ENCODE measurements at regions of chr2 and their contacts with region 1.

Region 1: DNA sequence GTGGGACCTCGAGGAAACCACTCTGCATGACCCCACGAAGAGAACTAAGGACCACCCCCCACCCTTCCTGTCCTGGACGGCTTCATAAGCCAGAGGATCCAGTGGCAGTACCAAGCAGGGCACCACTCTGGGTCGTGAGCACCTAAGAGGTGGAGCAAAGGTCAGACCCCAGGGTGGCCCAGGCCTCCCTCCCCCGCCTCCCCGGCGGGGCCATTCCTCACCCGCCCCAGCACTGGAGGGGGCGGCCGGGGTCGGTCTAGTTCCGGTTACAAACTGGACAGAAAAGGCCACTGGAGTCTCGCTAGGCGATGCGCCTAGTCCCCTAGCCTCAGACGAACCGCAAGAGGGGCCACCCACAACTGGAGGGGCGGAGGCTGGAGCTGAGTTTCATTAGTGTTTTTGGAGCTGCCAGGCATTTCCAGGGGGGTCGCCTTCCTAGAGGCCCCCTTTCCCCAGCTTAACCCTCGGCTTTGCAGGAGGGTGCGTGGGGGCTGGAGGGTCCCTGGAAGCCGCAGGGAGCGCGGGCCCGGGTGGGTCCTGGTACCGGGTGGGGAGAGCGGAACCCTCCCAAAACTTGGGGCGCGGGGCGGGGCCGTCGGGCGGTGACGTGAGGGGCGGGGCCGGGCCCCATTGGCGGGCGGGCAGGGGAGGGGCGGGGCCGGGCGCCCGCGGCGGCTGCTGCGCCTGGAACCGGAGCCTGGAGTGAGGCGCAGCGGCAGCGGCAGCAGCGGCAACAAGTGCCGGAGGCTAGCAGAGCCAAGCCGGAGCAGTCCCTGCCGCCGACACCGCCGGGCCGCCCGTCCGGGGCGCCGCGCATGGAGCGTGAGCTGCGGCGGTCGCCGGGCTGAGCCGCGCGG is at the start of gene B3GNT2:
- DNase-seq: peak; percentile 75
- H3K4me3 Mint-ChIP-seq: peak within 1 kb of the TSS; percentile 87
- H3K27ac Mint-ChIP-seq: peak within 1 kb of the TSS; percentile 89
- H3K4me1 Mint-ChIP-seq: peaks cover 36% of the 10 kb centered on the region
- H3K27me3 Mint-ChIP-seq: no peaks in the 10 kb centered on the region
- total RNA-seq, gene B3GNT2: 32.8 and 37.3 TPM in 2 replicates

Region 2: DNA sequence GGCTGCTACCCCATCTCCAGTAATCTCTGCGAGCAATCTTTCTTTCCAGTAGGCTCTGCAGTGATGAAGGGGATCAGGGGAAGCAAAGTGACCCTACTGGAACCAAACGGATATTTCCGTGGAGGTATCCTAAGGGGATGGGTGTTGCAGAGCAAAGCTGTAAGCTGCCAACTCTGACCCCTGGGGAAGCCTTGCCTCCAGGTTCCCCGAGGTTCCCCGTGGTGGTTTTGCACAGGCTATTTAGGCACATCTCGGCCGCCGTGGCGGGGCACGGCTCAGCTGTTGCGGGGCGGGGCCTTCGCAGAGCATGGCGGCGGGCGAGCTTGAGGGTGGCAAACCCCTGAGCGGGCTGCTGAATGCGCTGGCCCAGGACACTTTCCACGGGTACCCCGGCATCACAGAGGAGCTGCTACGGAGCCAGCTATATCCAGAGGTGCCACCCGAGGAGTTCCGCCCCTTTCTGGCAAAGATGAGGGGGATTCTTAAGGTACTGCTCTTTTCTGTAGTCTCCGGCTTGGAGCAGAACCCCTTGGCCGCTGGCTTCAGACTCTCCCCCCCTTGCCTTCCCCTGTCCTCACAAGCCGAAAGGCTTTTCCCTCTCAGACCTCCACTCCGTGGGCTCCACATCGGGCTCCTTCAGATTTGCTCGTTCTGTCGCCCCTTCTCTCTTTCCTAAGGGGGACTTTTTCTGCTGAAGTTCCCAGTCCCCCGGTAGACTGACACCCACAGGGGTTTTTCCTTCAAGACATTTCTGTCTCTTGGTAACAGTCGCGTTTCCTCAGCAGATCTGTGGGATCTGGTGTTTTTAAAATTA is 290.1 kb before region 1 on chr2 and contains the start of gene COMMD1:
- intact Hi-C with region 1: loop called (anchors 5 kb)
- DNase-seq: peak; percentile 78
- H3K4me3 Mint-ChIP-seq: peak within 1 kb of the TSS; percentile 97
- H3K27ac Mint-ChIP-seq: peak within 1 kb of the TSS; percentile 81
- H3K4me1 Mint-ChIP-seq: peaks cover 18% of the 10 kb centered on the region
- H3K27me3 Mint-ChIP-seq: no peaks in the 10 kb centered on the region
- total RNA-seq, gene COMMD1: 25.4 and 28.9 TPM in 2 replicates

Region 3: GRCh38 chr2:61922714-61923113 is 272.9 kb before region 1 on chr2:
- intact Hi-C with region 1: loop called (anchors 1 kb)
- DNase-seq: no peak
- H3K4me3 Mint-ChIP-seq: no peak overlapping the region
- H3K27ac Mint-ChIP-seq: no peak overlapping the region
- H3K4me1 Mint-ChIP-seq: no peaks in the 10 kb centered on the region
- H3K27me3 Mint-ChIP-seq: no peaks in the 10 kb centered on the region

Region 4: DNA sequence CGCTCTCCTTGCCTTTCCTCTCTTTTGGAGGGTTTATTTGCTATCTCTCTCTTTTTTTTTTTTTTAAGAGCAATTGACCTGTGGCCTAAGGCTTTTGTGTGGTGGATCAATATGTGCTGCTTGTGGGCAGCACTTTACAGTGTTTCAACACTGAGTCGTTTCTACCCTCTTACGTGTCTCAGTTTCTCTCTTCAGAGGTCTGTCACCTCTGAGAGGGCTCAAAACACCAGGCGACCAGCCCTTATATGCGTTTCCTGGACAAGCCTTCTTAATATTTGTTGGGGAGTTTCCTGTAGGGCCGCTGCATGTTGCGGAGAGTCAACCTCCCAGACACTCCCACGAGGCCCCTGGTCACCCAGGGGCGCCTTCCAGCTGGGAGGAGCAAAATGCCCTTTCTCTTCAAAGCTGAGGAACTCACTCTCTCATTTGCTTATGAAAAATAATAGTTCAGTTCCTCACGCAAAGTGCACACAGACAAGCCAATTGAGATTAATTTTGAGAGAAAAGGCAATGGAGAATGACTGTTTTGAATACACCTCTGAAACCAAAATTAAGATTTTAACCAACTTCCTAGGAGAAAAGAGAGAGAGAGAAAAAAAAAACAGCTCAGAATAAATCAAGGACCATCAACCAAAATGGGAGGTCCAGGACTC is 96.0 kb before region 1 on chr2:
- intact Hi-C with region 1: no loop called
- DNase-seq: no peak
- H3K4me3 Mint-ChIP-seq: no peak overlapping the region
- H3K27ac Mint-ChIP-seq: no peak overlapping the region
- H3K4me1 Mint-ChIP-seq: no peaks in the 10 kb centered on the region
- H3K27me3 Mint-ChIP-seq: no peaks in the 10 kb centered on the region